HepG2 (cell line): ENCODE measurements at regions of chr1 and their contacts with region 1.

Region 1: DNA sequence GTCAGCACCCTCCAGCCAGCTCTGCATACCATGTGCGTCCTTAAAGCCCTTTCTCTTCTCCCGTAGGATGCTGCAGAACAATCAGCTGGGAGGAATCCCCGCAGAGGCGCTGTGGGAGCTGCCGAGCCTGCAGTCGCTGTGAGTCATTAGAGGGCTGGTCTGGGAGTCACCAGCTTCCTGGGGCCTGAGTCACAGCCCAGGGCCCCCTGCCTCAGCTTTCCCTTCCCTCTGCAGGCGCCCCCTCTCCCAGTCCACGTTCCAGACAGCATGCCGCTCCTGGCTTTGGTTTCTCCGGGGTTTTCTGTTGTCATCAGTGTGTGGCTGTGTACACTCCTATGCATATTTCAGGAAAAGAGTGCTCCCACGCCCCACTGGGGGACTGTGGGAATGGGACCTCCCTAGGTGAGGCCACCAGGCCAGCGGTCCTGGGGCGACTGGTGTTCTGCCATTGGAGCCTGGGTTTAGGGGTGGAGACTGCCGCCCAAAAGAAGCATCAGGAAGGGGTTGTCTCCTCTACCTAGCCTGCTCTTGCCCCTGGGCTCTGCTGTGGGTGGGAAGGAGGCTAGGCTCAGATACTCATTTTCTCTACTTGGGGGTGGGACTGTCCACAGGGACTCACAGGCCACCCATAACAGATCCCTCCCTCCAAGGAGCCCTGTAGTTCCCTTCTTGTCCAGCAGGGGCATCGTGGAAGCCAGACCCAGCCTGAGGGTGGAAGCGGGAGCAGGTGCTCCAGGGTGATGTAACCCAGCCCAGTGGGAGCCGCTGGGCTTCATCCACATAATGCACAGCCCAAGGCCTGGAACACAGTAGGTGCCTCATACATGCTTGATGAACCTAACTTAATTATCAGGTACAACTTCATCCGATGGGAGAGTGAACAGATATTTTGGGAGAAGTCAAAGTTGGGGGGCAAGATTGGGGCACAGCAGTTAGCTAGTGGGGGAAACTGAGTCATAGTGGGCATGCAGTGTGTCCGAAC is 42.5 kb downstream of the LGR6 start:
- DNase-seq: peak; percentile 66
- ATAC-seq: peak; percentile 91
- H3K4me3 ChIP-seq: 0 out of 6 replicates have a peak overlapping the region, but pooled peaks of 1 of the 3 experiments have one; percentile 7
- H3K27ac ChIP-seq: no peak overlapping the region
- H3K4me1 ChIP-seq: peaks cover 20% of the 10 kb centered on the region
- H3K27me3 ChIP-seq: peaks cover 0 to 33% of the 10 kb centered on the region in 2 experiments; a peak in 4 of 5 replicates
- CTCF ChIP-seq: peak; percentile 75
- EP300 ChIP-seq: no peak
- POLR2A ChIP-seq: no peak
- RAD21 ChIP-seq: 0 out of 2 replicates have a peak, but pooled peaks have one; percentile 20

Region 2: GRCh38 chr1:202192770-202193613 is 43.2 kb before region 1 on chr1:
- CTCF ChIA-PET with region 1: no interaction called
- POLR2A ChIA-PET with region 1: no interaction called
- in situ Hi-C with region 1: no loop called
- intact Hi-C with region 1: loop called (anchors 5 kb)
- DNase-seq: peak; percentile 43
- ATAC-seq: peak; percentile 30
- H3K4me3 ChIP-seq: no peak overlapping the region; a peak in 1 of 6 replicates
- H3K27ac ChIP-seq: no peak overlapping the region
- H3K4me1 ChIP-seq: peaks cover 41% of the 10 kb centered on the region
- H3K27me3 ChIP-seq: peaks cover 11 to 24% of the 10 kb centered on the region in 2 experiments
- CTCF ChIP-seq: peak; percentile 92
- EP300 ChIP-seq: no peak
- POLR2A ChIP-seq: no peak
- RAD21 ChIP-seq: peak; percentile 76